Cardiac septum (tissue), 1 donor: ENCODE measurements at regions of chr3 and their contacts with region 1.

Region 1: DNA sequence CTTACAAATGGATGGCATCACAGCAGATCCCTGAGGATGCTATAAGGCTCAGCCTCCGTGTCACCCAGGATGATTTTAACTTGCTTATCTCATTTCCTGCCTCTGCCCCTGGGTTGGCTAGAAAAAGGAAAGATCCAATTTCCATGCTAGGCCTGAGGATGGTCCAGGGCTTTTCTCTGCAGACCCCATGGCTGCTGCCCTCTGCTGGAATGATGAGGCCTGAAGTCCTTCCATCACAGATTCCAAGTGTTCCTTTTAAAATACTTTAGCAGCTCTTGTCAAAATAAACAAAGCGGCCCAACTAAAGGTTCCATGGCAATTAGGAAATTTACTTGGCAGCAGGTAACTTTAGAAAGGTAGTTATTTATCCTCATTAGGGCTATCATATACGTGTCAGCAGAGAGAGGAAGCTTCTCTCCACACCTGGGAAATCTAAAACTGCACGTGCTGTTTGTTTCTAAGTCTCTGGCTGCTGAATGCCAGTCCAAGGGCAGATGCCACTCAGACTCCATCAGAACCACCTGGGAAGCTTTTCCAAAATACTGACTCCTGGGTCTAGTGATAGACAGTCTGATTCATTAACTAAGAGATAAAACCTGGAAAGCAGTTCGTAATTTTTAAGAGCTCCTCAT is 401.9 kb upstream of the IL12A start:
- DNase-seq: no peak

Region 2: GRCh38 chr3:159322322-159322939 is 264.3 kb before region 1 on chr3:
- intact Hi-C with region 1: loop called (anchors 10 kb)
- DNase-seq: no peak